Activated CD4-positive, alpha-beta memory T cell treated with anti-CD3 and anti-CD28 coated beads for 36 hours (primary cell): ENCODE measurements at regions of chr7 and their contacts with region 1.

Region 1: DNA sequence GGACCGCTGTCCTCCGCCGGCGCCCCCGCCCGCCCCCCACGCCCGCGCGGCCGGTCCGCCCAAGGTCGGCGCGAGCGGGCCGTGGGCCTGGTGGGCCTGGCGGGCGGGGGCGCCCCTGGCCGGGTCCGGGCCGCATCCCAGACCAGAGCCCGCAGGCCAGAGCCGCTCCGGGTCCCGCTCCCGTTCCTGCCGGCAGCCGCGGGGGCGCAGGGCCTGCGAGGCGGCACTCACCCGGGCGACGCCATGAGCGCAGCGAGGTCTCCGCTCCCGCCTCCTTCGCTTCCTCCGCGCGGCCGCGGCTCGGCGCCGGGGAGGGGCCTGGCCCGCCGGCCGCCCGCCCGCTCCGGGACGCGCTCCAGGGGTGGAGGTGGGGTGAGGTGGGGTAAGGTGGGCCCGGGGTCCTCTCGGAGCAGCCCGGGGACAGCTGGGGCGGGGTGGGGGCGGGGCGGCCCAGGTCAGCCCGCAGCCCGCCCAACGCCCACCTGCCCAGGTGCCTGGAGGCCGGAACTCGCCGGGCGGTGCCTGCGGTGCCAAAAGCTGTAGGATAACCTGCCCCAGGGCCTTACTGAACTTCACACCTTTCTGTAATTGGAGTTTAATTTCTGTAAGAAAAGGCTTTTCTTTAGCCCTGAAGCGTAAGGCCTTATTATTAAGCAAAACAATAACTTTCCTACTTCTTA is at the start of gene URGCP:
- DNase-seq: peak; percentile 61
- H3K4me3 Mint-ChIP-seq: peak within 1 kb of the TSS; percentile 90
- H3K27ac Mint-ChIP-seq: peak within 1 kb of the TSS; percentile 80
- H3K4me1 Mint-ChIP-seq: peaks cover 37% of the 10 kb centered on the region
- H3K27me3 Mint-ChIP-seq: no peaks in the 10 kb centered on the region
- total RNA-seq, gene URGCP: 22.3 to 24.0 TPM

Region 2: GRCh38 chr7:43869006-43869866 is 37.2 kb before region 1 on chr7 and contains the start of gene MRPS24:
- CTCF ChIA-PET with region 1: no interaction called
- POLR2A ChIA-PET with region 1: no interaction called
- intact Hi-C with region 1: loop called (anchors 5 kb)
- DNase-seq: peak; percentile 97
- H3K4me3 Mint-ChIP-seq: peak within 1 kb of the TSS; percentile 78
- H3K27ac Mint-ChIP-seq: peak within 1 kb of the TSS; percentile 75
- H3K4me1 Mint-ChIP-seq: peaks cover 30% of the 10 kb centered on the region
- H3K27me3 Mint-ChIP-seq: peaks cover 1% of the 10 kb centered on the region
- total RNA-seq, gene MRPS24: 115 to 128 TPM

Region 3: GRCh38 chr7:44194069-44194468 is 287.6 kb after region 1 on chr7:
- CTCF ChIA-PET with region 1: no interaction called
- POLR2A ChIA-PET with region 1: no interaction called
- intact Hi-C with region 1: no loop called
- DNase-seq: peak; percentile 68
- H3K4me3 Mint-ChIP-seq: no peak overlapping the region
- H3K27ac Mint-ChIP-seq: no peak overlapping the region
- H3K4me1 Mint-ChIP-seq: peaks cover 6% of the 10 kb centered on the region
- H3K27me3 Mint-ChIP-seq: peaks cover 9% of the 10 kb centered on the region